OCI-LY7 (cell line): ENCODE measurements at regions of chr6 and their contacts with region 1.

Region 1: DNA sequence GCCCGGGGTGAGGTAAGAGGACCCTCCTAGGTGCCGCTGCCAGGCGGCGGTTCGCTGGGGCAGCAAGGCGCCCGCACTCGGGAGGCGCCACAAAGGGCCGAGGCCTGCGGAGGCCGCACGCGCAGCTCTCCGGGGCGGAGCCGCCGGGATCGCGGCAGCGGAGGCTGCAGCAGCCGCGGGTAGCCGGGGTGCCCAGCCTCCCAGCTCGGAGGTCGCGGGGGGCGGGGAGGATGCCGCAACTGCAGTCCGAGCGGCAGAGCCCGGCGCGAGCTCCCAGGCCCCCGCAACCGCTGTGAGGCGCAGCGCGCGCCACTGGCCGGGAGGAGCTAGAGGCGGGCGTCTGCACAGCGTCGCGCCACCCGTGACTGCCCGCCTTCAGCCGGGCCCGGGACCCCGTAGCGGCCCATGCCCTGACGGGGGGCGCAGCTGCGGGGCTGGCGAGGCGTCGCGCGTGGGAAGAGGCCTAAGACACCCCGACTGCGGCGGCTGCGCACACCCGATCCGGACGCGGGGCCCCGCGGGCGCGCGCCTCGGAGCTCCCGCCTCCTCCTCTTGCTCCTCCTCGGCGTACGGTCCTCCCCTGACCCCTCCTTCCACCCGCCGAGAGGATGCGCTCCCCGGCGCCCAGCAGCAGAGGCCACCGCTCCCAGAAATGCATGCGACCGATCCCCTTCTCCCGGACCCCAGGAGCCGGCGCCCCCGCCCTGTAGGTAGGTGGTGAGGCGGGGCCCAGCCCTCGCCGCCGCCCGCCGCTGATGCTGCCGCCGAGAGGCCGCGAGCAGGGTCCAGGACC is at the start of gene NCOA7:
- DNase-seq: peak; percentile 80
- H3K4me3 ChIP-seq: peak within 1 kb of the TSS; percentile 96
- H3K27ac ChIP-seq: peak within 1 kb of the TSS; percentile 84
- H3K4me1 ChIP-seq: peaks cover 61% of the 10 kb centered on the region
- CTCF ChIP-seq: peak; percentile 32; the same call in 1 of the 2 replicates
- total RNA-seq, gene NCOA7: 14.8 and 18.1 TPM in 2 replicates

Region 2: DNA sequence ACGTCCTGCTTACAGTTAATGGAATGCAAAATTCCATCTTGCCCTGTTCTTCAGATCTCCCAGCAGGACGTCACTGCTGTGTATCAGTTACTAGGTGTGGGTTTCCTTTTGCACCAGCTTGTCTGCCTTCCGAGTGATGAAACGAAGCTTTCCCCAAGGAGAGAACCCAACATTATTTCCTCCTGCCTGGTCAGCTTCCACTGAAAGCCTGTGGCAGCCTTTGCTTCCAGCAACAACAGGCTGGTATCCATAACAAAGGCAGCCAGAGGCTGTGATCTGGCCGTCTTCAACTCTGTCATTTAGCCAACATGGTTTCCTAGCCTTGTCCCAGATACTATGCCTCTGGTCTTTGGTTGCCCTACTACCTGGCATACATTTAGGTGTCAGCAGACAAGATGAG is 120.0 kb before region 1 on chr6:
- CTCF ChIA-PET with region 1: no interaction called
- POLR2A ChIA-PET with region 1: no interaction called
- intact Hi-C with region 1: no loop called
- DNase-seq: no peak
- H3K4me3 ChIP-seq: no peak overlapping the region
- H3K27ac ChIP-seq: no peak overlapping the region
- H3K4me1 ChIP-seq: no peaks in the 10 kb centered on the region
- CTCF ChIP-seq: no peak

Region 3: DNA sequence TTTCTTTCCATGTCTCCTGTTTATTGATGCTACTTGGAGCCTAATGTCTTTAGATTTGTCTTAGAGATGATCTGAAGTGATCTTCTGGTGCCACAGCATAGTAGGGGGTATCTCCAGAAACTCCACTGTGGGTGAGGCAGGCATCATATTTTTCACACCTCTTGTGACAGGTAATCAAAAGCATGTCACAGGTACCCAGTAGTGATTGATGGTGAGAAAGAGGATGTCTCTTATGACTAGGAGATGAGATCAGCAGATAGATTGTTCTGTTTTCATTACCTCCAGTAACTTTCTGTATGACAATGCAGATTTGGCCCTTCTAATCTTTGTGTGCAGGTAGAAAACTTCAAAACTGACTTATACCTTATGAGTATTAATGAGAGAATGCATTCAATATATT is 13.7 kb after region 1 on chr6:
- CTCF ChIA-PET with region 1: interaction called, 3 read pairs
- POLR2A ChIA-PET with region 1: interaction called, 28 read pairs
- intact Hi-C with region 1: no loop called
- DNase-seq: no peak
- H3K4me3 ChIP-seq: no peak overlapping the region
- H3K27ac ChIP-seq: no peak overlapping the region
- H3K4me1 ChIP-seq: peaks cover 99% of the 10 kb centered on the region
- CTCF ChIP-seq: no peak

Region 4: GRCh38 chr6:125858427-125859320 is 68.1 kb after region 1 on chr6:
- CTCF ChIA-PET with region 1: no interaction called
- POLR2A ChIA-PET with region 1: interaction called, 8 read pairs
- intact Hi-C with region 1: loop called (anchors 5 kb)
- DNase-seq: no peak
- H3K4me3 ChIP-seq: no peak overlapping the region
- H3K27ac ChIP-seq: no peak overlapping the region
- H3K4me1 ChIP-seq: no peaks in the 10 kb centered on the region
- CTCF ChIP-seq: no peak

Region 5: GRCh38 chr6:125956506-125957390 is 166.2 kb after region 1 on chr6 and contains the start of gene HINT3:
- CTCF ChIA-PET with region 1: interaction called, 29 read pairs
- POLR2A ChIA-PET with region 1: interaction called, 69 read pairs
- intact Hi-C with region 1: loop called (anchors 1 kb)
- DNase-seq: peak; percentile 99
- H3K4me3 ChIP-seq: peak within 1 kb of the TSS; percentile 79
- H3K27ac ChIP-seq: peak within 1 kb of the TSS; percentile 76
- H3K4me1 ChIP-seq: peaks cover 20% of the 10 kb centered on the region
- CTCF ChIP-seq: peak; percentile 92
- total RNA-seq, gene HINT3: 10.4 and 11.8 TPM in 2 replicates

Region 6: DNA sequence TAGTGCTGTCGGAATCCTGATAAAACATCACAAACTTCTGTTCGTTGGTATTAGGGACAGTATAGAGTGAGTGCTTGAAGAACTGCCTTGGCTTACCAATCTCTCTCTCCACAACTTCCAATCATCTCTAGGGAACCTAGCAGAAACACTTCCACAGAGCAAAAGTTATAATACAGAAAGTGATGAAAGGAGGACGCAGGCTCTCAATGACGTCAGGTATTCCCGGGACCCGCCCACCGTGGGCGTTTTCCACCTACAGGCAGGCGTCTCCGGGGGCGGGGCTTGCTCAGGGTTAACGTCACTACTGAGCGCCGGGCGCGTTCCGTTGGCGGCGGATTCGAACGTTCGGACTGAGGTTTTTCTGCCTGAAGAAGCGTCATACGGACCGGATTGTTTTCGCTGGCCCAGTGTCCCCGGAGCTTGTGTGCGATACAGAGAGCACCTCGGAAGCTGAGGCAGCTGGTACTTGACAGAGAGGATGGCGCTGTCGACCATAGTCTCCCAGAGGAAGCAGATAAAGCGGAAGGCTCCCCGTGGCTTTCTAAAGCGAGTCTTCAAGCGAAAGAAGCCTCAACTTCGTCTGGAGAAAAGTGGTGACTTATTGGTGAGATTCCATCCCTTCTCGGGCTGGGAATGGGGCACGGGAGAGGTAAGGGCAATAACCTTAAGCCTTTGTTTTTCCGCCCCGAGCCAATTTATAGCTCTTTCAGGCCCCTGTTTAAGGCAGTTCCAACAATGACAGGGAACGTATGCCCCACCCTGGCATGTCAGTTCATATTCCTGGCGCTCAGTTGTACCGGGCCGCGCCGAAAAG is 549.4 kb after region 1 on chr6 and contains the start of gene CENPW:
- CTCF ChIA-PET with region 1: no interaction called
- POLR2A ChIA-PET with region 1: no interaction called
- intact Hi-C with region 1: loop called (anchors 2 kb)
- DNase-seq: peak; percentile 95
- H3K4me3 ChIP-seq: peak within 1 kb of the TSS; percentile 87
- H3K27ac ChIP-seq: peak within 1 kb of the TSS; percentile 87
- H3K4me1 ChIP-seq: peaks cover 20% of the 10 kb centered on the region
- CTCF ChIP-seq: peak; percentile 41
- total RNA-seq, gene CENPW: 22.1 and 28.6 TPM in 2 replicates